AG04450 (cell line): ENCODE measurements at regions of chr2 and their contacts with region 1.

Region 1: DNA sequence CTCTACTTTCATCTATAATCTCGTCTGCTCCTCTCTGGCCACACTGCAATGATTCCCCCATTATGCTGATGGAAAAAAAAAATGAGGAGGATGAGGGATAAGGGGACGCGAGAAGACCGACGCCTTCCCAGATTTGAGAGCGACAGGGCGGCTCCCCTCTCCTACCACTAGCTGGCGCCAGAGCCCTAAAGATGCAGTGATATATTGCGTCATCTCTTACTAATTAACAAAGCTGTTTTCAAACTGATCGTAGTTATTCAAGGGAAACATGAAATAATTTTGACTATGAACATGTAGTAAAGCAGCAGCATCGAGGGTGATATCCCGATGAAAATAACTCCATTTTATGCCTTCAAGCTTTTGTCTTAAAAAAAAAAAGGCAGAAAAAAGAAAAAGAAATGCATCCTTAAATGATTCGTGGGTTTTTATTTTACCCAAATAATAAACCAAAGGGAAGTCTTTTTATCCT is 48.0 kb upstream of the HNRNPA3 start:
- DNase-seq: no peak
- H3K4me3 ChIP-seq: peak overlapping the region; percentile 42
- H3K27ac ChIP-seq: no peak overlapping the region
- H3K27me3 ChIP-seq: no peaks in the 10 kb centered on the region
- CTCF ChIP-seq: peak; percentile 100

Region 2: GRCh38 chr2:177148477-177149154 is 16.0 kb before region 1 on chr2:
- CTCF ChIA-PET with region 1: interaction called, 104 read pairs
- POLR2A ChIA-PET with region 1: interaction called, 4 read pairs
- DNase-seq: no peak
- H3K4me3 ChIP-seq: peak overlapping the region; percentile 61
- H3K27ac ChIP-seq: no peak overlapping the region
- H3K27me3 ChIP-seq: peaks cover 16% of the 10 kb centered on the region
- CTCF ChIP-seq: peak; percentile 97

Region 3: DNA sequence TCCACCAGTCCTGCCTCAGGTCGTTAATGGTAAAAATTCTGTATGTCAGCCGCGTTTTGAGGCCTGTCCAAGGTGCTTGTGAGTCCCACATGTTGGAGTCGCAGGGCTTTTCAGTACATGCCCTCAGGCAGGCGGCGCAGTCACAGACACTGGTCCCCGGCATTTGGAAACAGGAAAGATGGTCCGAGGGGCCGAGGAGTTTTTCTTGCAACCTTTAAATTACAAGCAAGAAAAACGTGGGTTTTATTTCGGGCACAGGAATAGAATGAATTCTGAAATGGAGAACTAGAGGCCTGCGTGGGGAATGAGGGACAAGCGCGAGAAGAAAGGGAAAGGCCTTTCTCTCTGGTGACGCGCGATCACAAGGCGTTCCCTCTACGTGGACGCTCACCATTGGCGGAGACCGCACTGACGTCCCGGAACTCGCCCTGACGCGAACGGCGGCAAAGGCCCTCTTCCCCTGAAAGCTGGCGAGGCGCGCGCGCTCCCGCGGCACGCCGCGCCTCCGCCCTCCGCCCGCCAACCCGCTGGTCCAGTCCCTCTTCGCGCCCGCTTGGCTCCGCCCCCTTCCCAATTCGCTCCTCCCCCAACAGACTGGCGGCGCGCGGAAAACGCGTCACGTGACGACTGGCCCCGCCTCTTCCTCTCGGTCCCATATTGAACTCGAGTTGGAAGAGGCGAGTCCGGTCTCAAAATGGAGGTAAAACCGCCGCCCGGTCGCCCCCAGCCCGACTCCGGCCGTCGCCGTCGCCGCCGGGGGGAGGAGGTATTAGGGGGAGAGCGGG is 47.7 kb after region 1 on chr2 and contains the start of gene HNRNPA3:
- CTCF ChIA-PET with region 1: interaction called, 9 read pairs
- POLR2A ChIA-PET with region 1: interaction called, 11 read pairs
- DNase-seq: peak; percentile 97
- H3K4me3 ChIP-seq: peak within 1 kb of the TSS; percentile 80
- H3K27ac ChIP-seq: peak within 1 kb of the TSS; percentile 100
- H3K27me3 ChIP-seq: no peaks in the 10 kb centered on the region
- CTCF ChIP-seq: peak; percentile 26
- polyA plus RNA-seq, gene HNRNPA3: 143 and 177 TPM in 2 replicates

Region 4: GRCh38 chr2:177239932-177240630 is 75.5 kb after region 1 on chr2:
- CTCF ChIA-PET with region 1: interaction called, 15 read pairs
- POLR2A ChIA-PET with region 1: no interaction called
- DNase-seq: no peak
- H3K4me3 ChIP-seq: no peak overlapping the region
- H3K27ac ChIP-seq: no peak overlapping the region
- H3K27me3 ChIP-seq: no peaks in the 10 kb centered on the region
- CTCF ChIP-seq: no peak

Region 5: DNA sequence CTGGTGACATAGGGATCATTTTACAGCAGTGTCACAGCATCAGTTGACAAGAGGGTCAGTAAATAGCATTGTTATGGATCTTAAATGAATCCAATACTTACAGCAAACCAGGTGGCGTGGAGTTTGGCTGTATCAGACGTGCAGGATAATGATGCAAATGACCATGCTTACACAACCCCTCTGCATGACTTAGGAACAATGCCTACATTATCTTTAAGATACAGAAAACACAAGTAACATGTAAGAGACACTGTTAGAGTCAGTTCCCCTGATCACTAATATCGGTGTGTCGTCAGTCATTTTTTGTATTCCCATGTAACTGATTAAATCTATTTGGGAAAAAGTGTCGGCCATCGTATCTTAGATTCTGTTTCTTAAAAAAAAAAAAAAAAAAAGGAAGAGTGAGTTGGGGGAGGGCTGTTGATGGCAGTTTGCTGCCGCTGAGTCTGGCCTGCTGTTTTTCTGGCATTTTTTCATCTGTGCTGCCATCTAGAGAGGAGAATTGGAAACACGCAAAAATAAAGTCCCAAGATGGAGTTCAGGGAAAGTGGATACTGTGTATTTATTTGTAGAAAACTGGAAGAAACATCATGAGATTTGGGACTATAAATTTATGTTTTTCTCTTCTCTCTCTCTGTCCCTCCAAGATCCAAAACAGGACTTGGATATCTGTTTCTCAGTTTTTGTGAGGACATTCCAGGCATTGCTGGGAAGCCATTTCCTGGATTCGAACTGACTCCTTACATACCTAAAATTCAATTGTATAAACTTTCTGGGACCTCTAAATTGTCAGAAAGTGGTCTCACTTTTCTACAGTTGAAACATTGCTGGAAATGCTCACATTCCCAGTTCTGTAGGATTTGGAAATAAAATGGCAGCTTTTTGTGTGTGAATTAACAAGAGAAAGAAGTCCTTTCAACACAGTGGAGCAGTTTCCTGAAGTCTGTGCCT is 167.7 kb after region 1 on chr2:
- CTCF ChIA-PET with region 1: interaction called, 178 read pairs
- POLR2A ChIA-PET with region 1: interaction called, 4 read pairs
- DNase-seq: peak; percentile 62
- H3K4me3 ChIP-seq: no peak overlapping the region
- H3K27ac ChIP-seq: no peak overlapping the region
- H3K27me3 ChIP-seq: no peaks in the 10 kb centered on the region
- CTCF ChIP-seq: peak; percentile 72

Region 6: DNA sequence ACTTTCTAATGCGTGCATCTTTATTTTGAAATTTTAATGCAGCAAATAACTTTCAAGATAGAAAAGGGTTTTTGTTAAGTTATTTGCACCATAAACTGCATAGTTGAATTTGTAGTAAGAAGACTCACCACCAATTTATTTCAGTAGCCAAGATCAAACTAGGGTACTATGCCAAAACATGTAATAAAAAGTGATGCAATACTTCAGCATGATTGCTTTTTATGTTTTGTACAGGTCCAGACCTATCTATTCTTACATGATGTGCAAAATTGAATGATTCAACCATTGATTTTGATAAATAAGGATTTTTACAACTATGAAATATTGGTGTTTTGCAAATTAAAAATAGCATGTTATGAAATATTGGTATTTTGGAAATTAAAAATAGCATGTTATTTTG is 254.7 kb after region 1 on chr2:
- CTCF ChIA-PET with region 1: interaction called, 102 read pairs
- POLR2A ChIA-PET with region 1: interaction called, 3 read pairs
- DNase-seq: no peak
- H3K4me3 ChIP-seq: no peak overlapping the region
- H3K27ac ChIP-seq: no peak overlapping the region
- H3K27me3 ChIP-seq: no peaks in the 10 kb centered on the region
- CTCF ChIP-seq: no peak

Region 7: DNA sequence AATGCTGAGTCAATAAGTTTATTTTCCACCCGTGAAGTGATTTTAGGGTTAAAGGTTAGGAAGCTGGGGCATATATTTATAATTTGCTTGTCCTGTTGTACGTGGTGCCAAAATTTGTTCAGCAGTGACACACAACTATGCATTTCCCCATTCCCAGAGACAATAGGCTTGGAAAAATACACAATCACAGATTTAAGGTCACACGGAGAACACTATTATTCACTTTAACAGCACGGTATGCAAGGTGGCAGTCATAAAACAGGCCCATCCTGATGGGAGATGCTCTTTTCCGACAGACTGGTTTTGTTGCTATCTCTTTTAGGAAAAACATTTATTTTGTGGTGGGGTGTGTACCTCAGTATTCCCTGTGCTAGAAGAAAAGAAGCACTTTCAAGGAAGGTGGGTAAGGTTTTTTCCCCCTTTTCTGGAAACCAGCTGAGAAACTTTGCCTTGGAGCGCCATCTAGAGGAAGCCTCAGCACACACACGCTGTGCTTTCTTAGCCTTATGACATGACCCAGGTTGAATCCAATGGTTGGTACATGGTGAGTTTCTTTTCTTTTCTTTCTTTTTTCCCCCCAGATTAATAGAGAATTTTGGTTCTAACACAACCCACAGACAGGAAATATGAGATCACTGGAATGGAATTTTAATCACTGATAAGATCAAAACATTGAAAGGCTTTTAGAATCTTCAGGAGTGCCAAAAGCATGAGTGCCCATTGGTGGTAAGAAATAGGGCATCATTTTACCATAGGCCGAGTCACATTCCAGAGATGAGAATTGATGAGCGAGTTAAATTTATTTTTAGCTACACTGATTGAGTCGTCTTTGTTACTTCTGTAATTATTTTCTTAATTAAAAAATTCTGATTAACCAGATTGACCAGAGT is 560.0 kb after region 1 on chr2:
- CTCF ChIA-PET with region 1: interaction called, 24 read pairs
- POLR2A ChIA-PET with region 1: no interaction called
- DNase-seq: peak; percentile 7
- H3K4me3 ChIP-seq: no peak overlapping the region
- H3K27ac ChIP-seq: no peak overlapping the region
- H3K27me3 ChIP-seq: peaks cover 8% of the 10 kb centered on the region
- CTCF ChIP-seq: peak; percentile 89